Left cardiac atrium (tissue), 4 donors: ENCODE measurements at regions of chr9 and their contacts with region 1.

Region 1: GRCh38 chr9:17462869-17463464 is 115.9 kb upstream of the SH3GL2 start:
- DNase-seq: no peak
- ATAC-seq: no peak

Region 2: GRCh38 chr9:17116400-17116837 is 346.5 kb before region 1 on chr9:
- intact Hi-C with region 1: loop called (anchors 1 to 5 kb)
- DNase-seq: no peak
- ATAC-seq: peak in 1 of 2 donors; percentile 46

Region 3: DNA sequence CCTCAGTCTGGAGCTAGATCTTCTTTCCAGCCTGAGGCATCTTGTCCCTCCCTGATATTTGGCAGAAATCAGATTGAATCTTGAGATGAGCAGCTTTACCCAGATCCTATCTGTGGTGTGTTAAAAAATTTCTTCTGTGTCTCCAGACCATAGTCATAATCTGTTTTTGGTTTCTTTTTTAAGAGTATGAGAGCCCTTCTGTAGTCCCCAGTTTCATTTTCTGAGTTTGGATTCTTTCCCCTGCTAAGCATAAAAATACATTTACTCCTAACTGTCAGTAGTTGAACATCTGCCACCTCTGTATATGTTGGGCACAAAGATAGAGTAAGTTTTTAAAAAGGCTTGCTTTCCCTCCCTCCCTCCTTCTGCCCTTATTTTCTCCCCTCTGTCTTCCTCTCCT is 190.4 kb before region 1 on chr9:
- intact Hi-C with region 1: no loop called
- DNase-seq: no peak
- ATAC-seq: no peak

Region 4: DNA sequence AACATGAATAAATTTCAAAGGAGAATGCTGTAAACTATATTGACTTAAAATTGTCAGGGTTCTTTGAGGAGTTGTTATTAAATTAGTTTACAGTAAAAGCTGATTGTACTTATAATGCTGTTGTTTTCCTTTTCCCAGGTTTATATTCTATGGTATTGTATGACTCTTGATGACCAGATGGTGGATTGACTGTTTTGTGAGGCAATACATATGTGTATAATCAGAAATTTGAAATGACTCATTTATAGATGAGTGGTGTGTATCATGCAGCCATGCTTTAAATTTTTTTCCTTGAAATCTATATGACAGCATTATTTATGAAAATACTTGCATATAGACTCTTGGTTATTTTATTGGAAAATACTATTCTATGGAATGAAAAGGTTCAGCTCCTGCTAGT is 132.9 kb before region 1 on chr9:
- intact Hi-C with region 1: no loop called
- DNase-seq: no peak
- ATAC-seq: no peak

Region 5: GRCh38 chr9:18060245-18060934 is 597.4 kb after region 1 on chr9:
- intact Hi-C with region 1: no loop called
- DNase-seq: no peak
- ATAC-seq: no peak